ENCODE measurements at regions of chr5 and their contacts with region 1.

Region 1: DNA sequence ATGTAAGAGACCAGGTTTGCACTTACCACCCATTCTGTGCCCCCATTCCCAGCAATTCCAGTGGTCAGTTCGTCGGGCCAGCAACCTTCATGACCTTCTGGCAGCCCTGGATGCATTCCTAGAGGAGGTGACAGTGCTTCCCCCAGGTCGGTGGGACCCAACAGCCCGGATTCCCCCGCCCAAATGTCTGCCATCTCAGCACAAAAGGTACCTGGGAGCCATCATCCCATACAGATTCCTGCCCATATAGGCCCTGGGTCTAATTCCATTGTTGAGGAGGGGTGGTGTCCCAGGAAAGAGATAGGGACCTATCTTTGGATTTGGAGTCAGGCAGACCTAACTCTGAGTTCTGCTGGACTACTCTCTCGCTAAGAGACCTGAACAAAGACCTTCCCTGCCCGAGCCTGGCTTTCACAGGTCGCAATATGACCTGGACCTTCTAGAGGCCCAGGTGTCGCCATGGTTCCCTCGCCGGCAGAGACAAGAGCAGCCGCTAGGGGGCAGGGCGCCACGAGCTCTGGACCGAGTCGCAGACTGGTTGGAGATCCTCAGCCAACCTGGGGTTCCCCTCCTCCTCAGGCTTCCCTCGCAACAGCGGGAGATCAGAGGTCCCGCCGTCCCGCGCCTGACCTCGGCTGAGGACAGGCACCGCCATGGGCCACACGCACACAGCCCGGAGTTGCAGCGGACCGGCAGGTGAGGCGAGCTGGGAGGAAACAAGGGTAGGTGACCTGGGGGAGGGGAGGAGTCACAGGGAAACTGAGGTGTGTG is 3.1 kb downstream of the SLC4A9 start:
- DNase-seq: peak; percentile 70
- ATAC-seq: peak; percentile 96
- H3K4me3 Mint-ChIP-seq: peak overlapping the region; percentile 76
- H3K27ac Mint-ChIP-seq: no peak overlapping the region
- H3K4me1 Mint-ChIP-seq: peaks cover 6% of the 10 kb centered on the region
- H3K27me3 Mint-ChIP-seq: no peaks in the 10 kb centered on the region
- CTCF ChIP-seq: peak; percentile 70

Region 2: GRCh38 chr5:139633295-139634027 is 729.6 kb before region 1 on chr5:
- CTCF ChIA-PET with region 1: no interaction called
- POLR2A ChIA-PET with region 1: no interaction called
- intact Hi-C with region 1: no loop called
- DNase-seq: peak; percentile 63
- ATAC-seq: peak; percentile 15
- H3K4me3 Mint-ChIP-seq: no peak overlapping the region
- H3K27ac Mint-ChIP-seq: peak overlapping the region; percentile 97
- H3K4me1 Mint-ChIP-seq: peaks cover 53% of the 10 kb centered on the region
- H3K27me3 Mint-ChIP-seq: no peaks in the 10 kb centered on the region
- CTCF ChIP-seq: peak; percentile 56

Region 3: GRCh38 chr5:140351609-140352334 is 11.3 kb before region 1 on chr5:
- CTCF ChIA-PET with region 1: interaction called, 24 read pairs
- POLR2A ChIA-PET with region 1: no interaction called
- intact Hi-C with region 1: no loop called
- DNase-seq: no peak
- ATAC-seq: peak; percentile 74
- H3K4me3 Mint-ChIP-seq: no peak overlapping the region
- H3K27ac Mint-ChIP-seq: no peak overlapping the region
- H3K4me1 Mint-ChIP-seq: peaks cover 21% of the 10 kb centered on the region
- H3K27me3 Mint-ChIP-seq: peaks cover 5% of the 10 kb centered on the region
- CTCF ChIP-seq: peak; percentile 62

Region 4: GRCh38 chr5:140725799-140726471 is 362.9 kb after region 1 on chr5:
- CTCF ChIA-PET with region 1: interaction called, 3 read pairs
- POLR2A ChIA-PET with region 1: no interaction called
- intact Hi-C with region 1: loop called (anchors 2 kb)
- DNase-seq: no peak
- ATAC-seq: peak; percentile 70
- H3K4me3 Mint-ChIP-seq: no peak overlapping the region
- H3K27ac Mint-ChIP-seq: no peak overlapping the region
- H3K4me1 Mint-ChIP-seq: peaks cover 8% of the 10 kb centered on the region
- H3K27me3 Mint-ChIP-seq: peaks cover 36% of the 10 kb centered on the region
- CTCF ChIP-seq: no peak

Region 5: GRCh38 chr5:141040771-141041426 is 677.9 kb after region 1 on chr5:
- CTCF ChIA-PET with region 1: no interaction called
- POLR2A ChIA-PET with region 1: no interaction called
- intact Hi-C with region 1: loop called (anchors 5 kb)
- DNase-seq: peak; percentile 25
- ATAC-seq: peak; percentile 50
- H3K4me3 Mint-ChIP-seq: no peak overlapping the region
- H3K27ac Mint-ChIP-seq: no peak overlapping the region
- H3K4me1 Mint-ChIP-seq: no peaks in the 10 kb centered on the region
- H3K27me3 Mint-ChIP-seq: peaks cover 2% of the 10 kb centered on the region
- CTCF ChIP-seq: no peak